Activated CD4-positive, alpha-beta T cell treated with anti-CD3 and anti-CD28 coated beads, Interleukin-2, amount 10 ng/mL, durations not matched to agents 24 days and 14 days (primary cell): ENCODE measurements at regions of chr17 and their contacts with region 1.

Region 1: GRCh38 chr17:40317880-40318829 is 9.2 kb downstream of the RARA start:
- DNase-seq: peak; percentile 97
- H3K4me3 Mint-ChIP-seq: peak overlapping the region; percentile 97
- H3K27ac Mint-ChIP-seq: peak overlapping the region; percentile 98
- H3K4me1 Mint-ChIP-seq: peaks cover 77% of the 10 kb centered on the region
- H3K27me3 Mint-ChIP-seq: peaks cover 4% of the 10 kb centered on the region

Region 2: GRCh38 chr17:40264458-40265185 is 53.5 kb before region 1 on chr17:
- intact Hi-C with region 1: no loop called
- DNase-seq: no peak
- H3K4me3 Mint-ChIP-seq: no peak overlapping the region
- H3K27ac Mint-ChIP-seq: no peak overlapping the region
- H3K4me1 Mint-ChIP-seq: peaks cover 8% of the 10 kb centered on the region
- H3K27me3 Mint-ChIP-seq: no peaks in the 10 kb centered on the region

Region 3: GRCh38 chr17:40287494-40288369 is 30.4 kb before region 1 on chr17 and contains the start of gene CDC6:
- intact Hi-C with region 1: loop called (anchors 1 kb)
- DNase-seq: peak; percentile 99
- H3K4me3 Mint-ChIP-seq: peak within 1 kb of the TSS; percentile 98
- H3K27ac Mint-ChIP-seq: peak within 1 kb of the TSS; percentile 99
- H3K4me1 Mint-ChIP-seq: peaks cover 44% of the 10 kb centered on the region
- H3K27me3 Mint-ChIP-seq: no peaks in the 10 kb centered on the region
- total RNA-seq, gene CDC6: 139 and 142 TPM in 2 replicates

Region 4: GRCh38 chr17:40303009-40303657 is 15.0 kb before region 1 on chr17:
- intact Hi-C with region 1: loop called (anchors 2 kb)
- DNase-seq: peak; percentile 87
- H3K4me3 Mint-ChIP-seq: no peak overlapping the region
- H3K27ac Mint-ChIP-seq: peak overlapping the region; percentile 29
- H3K4me1 Mint-ChIP-seq: peaks cover 16% of the 10 kb centered on the region
- H3K27me3 Mint-ChIP-seq: no peaks in the 10 kb centered on the region

Region 5: DNA sequence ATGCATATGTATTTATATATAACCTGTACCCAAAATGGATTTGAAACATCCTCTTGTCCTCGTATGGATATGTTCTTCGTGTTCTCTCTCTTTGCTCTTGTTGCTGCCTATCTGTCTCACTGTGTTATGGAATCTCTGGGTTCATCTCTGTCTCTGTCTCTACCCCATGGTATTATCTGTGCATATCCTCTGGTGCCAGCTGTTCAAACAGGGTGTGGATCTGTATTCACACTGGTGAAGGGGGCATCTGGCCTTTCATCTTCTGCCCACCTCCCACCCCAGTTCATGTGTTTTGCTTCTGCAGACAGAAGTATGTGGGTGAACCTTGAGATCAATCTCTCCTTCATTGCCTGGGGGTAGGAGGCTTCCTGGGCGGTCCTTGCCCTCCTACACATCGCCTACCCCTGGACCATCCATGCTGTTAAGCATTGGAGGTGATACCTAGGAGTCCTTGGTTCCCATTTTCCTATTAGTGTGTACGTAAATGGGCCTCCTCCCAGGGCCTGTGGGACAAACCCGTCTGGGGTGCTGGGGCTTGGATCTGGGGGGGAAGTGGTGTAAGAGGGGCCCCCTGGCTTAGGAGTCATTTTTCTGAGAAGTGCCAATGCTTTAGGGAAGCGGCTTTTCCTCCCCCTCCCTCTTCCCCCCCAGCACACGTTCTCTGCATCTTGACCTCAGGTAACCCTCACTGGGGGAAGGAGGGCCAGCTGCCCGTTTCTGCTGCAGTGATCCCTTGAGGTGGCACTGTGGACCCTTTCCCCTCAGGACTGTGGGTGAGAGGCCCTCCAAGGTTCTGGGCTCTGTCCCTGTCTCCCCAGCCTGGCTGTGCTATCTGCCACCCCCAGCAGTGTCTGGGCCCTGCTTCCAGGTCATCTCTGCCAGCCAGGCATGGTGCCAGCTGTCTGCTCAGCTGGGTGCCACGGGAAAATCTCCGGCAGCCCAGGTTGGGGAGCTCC is 12.0 kb after region 1 on chr17:
- intact Hi-C with region 1: loop called (anchors 1 kb)
- DNase-seq: peak; percentile 70
- H3K4me3 Mint-ChIP-seq: peak overlapping the region; percentile 78
- H3K27ac Mint-ChIP-seq: peak overlapping the region; percentile 47
- H3K4me1 Mint-ChIP-seq: peaks cover 80% of the 10 kb centered on the region
- H3K27me3 Mint-ChIP-seq: no peaks in the 10 kb centered on the region

Region 6: GRCh38 chr17:40340880-40341807 is 23.0 kb after region 1 on chr17:
- intact Hi-C with region 1: loop called (anchors 1 kb)
- DNase-seq: peak; percentile 95
- H3K4me3 Mint-ChIP-seq: peak overlapping the region; percentile 79
- H3K27ac Mint-ChIP-seq: peak overlapping the region; percentile 89
- H3K4me1 Mint-ChIP-seq: peaks cover 62% of the 10 kb centered on the region
- H3K27me3 Mint-ChIP-seq: no peaks in the 10 kb centered on the region

Region 7: GRCh38 chr17:40450175-40450574 is 132.0 kb after region 1 on chr17:
- intact Hi-C with region 1: no loop called
- DNase-seq: peak; percentile 83
- H3K4me3 Mint-ChIP-seq: no peak overlapping the region
- H3K27ac Mint-ChIP-seq: peak overlapping the region; percentile 37
- H3K4me1 Mint-ChIP-seq: peaks cover 55% of the 10 kb centered on the region
- H3K27me3 Mint-ChIP-seq: no peaks in the 10 kb centered on the region